H1 (cell line): ENCODE measurements at regions of chr11 and their contacts with region 1.

Region 1: GRCh38 chr11:20671856-20672546 is 2.6 kb downstream of the NELL1 start:
- DNase-seq: no peak
- H3K4me3 ChIP-seq: peak overlapping the region in 1 of 4 experiments; percentile 80; a peak in 1 of 8 replicates
- H3K27ac ChIP-seq: no peak overlapping the region
- H3K4me1 ChIP-seq: peaks cover 12 to 24% (median 13%) of the 10 kb centered on the region in 4 experiments; a peak in 6 of 7 replicates
- H3K27me3 ChIP-seq: peaks cover 43 to 56% (median 56%) of the 10 kb centered on the region in 4 experiments
- CTCF ChIP-seq: peak in 1 of 3 experiments; percentile 19; a peak in 1 of 4 replicates
- EP300 ChIP-seq: no peak
- POLR2A ChIP-seq: no peak
- RAD21 ChIP-seq: no peak

Region 2: GRCh38 chr11:20639688-20640087 is 32.3 kb before region 1 on chr11:
- CTCF ChIA-PET with region 1: interaction called, 17 read pairs
- POLR2A ChIA-PET with region 1: no interaction called
- DNase-seq: no peak
- H3K4me3 ChIP-seq: no peak overlapping the region
- H3K27ac ChIP-seq: no peak overlapping the region
- H3K4me1 ChIP-seq: peaks cover 0 to 5% (median 2%) of the 10 kb centered on the region in 4 experiments; a peak in 3 of 7 replicates
- H3K27me3 ChIP-seq: no peaks in the 10 kb centered on the region
- CTCF ChIP-seq: no peak
- EP300 ChIP-seq: no peak
- POLR2A ChIP-seq: no peak
- RAD21 ChIP-seq: no peak

Region 3: GRCh38 chr11:20658135-20658534 is 13.9 kb before region 1 on chr11:
- CTCF ChIA-PET with region 1: interaction called, 17 read pairs
- POLR2A ChIA-PET with region 1: no interaction called
- DNase-seq: no peak
- H3K4me3 ChIP-seq: no peak overlapping the region
- H3K27ac ChIP-seq: no peak overlapping the region
- H3K4me1 ChIP-seq: peaks cover 0 to 7% (median 5%) of the 10 kb centered on the region in 4 experiments; a peak in 5 of 7 replicates
- H3K27me3 ChIP-seq: no peaks in the 10 kb centered on the region
- CTCF ChIP-seq: no peak
- EP300 ChIP-seq: no peak
- POLR2A ChIP-seq: no peak
- RAD21 ChIP-seq: no peak

Region 4: DNA sequence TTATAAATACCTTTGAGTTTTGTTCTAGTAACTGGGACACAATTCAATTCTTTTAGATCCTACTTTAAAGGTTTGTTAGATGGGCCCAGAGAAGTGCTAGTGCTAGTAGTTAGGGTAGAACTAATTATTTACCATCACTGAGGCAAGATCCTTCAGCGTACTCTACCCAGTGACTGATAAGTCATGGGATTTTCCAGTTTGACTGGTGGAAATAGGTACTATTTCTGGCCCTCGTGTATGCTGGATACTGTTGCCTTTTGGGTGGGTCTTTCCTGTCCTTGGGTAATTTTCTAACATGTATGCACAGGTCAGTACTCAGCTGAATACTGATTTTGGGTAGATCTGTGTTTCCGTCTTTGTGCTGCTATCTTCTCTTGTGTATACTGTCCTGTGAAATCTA is 12.7 kb after region 1 on chr11:
- CTCF ChIA-PET with region 1: interaction called, 30 read pairs
- POLR2A ChIA-PET with region 1: no interaction called
- DNase-seq: no peak
- H3K4me3 ChIP-seq: no peak overlapping the region
- H3K27ac ChIP-seq: no peak overlapping the region
- H3K4me1 ChIP-seq: no peaks in the 10 kb centered on the region
- H3K27me3 ChIP-seq: no peaks in the 10 kb centered on the region
- CTCF ChIP-seq: no peak
- EP300 ChIP-seq: no peak
- POLR2A ChIP-seq: no peak
- RAD21 ChIP-seq: no peak